Activated CD8-positive, alpha-beta memory T cell treated with anti-CD3 and anti-CD28 coated beads, Interleukin-2, amount 10 ng/mL, durations not matched to agents 7 days and 5 days (primary cell): ENCODE measurements at regions of chr7 and their contacts with region 1.

Region 1: DNA sequence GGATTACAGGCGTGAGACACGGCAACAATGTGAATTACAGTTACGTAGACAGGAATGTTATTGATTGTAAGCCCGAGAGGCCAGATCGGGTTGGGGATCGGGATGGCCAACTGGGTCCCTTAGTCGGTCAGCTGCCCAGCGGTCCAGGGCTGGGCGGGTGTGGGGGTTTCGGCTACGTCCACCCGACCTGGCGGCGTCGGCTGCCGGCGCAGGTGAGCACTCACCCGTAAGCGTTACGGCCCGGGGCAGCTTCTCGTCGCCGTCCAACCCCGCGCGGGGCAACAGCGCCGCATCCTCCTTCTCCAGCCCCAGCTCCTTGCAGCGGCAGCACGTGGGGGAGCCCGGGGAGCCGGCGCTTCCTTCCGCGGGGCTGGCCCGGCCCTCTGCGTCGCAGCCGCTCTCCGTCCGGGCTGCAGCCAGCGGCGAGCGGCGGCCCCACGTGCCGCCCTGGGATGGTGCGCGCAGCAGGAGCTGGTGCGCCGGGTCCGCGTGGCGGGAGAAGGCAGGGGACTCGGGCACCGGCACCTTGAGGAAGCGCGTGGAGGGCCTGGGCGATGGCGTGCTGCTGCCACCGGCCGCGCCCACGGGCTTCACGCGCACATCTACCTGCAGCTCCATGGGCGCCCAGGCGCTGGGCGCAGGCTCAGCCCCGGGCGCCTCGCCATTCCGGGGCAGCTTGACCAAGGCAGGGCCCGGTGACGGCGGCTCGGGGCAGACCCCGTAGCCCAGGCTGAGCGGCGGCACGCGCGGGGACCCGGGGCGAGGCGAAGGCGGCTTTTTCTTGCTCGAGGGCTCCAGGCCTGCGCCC is 607 bp downstream of the KLRG2 start:
- DNase-seq: no peak
- ATAC-seq: peak; percentile 58
- H3K4me3 Mint-ChIP-seq: peak overlapping the region; percentile 43
- H3K27ac Mint-ChIP-seq: no peak overlapping the region
- H3K4me1 Mint-ChIP-seq: peaks cover 4% of the 10 kb centered on the region
- H3K27me3 Mint-ChIP-seq: peaks cover 59% of the 10 kb centered on the region

Region 2: GRCh38 chr7:139502226-139502625 is 19.4 kb after region 1 on chr7:
- CTCF ChIA-PET with region 1: interaction called, 11 read pairs
- DNase-seq: no peak
- ATAC-seq: no peak
- H3K4me3 Mint-ChIP-seq: no peak overlapping the region
- H3K27ac Mint-ChIP-seq: no peak overlapping the region
- H3K4me1 Mint-ChIP-seq: peaks cover 6% of the 10 kb centered on the region
- H3K27me3 Mint-ChIP-seq: peaks cover 12% of the 10 kb centered on the region